Ascending aorta (tissue), 2 donors: ENCODE measurements at regions of chr11 and their contacts with region 1.

Region 1: DNA sequence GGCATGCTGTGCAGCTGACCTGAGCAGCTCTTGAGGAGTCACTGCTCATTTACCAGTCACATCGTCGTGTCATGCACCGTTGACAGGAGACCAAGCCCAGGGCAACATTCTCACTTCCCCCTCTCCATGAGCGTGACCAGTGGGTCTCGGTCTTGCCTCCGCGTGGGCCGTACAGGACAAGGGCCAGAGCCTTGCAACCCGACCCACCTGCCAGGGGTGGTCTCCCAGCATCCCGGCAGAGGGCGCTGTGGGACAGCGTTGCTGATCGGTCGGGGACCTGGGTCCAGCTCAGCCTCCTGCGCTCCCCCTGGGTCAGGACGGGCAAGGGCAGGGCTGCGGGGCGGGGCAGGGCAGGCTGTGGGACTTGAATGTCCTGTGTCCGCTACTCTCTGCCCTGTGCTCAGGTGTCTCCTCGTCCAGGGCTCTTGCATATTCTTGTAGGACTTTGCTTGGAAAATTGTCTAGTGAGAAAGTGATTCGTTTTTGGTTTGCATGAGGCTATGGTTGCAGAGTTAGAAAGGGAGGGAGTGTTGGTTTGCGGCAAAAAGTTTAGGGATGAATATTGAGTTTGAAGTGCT is 16.2 kb downstream of the EIF4G2 start:
- DNase-seq: peak; percentile 36 to 92
- H3K4me3 ChIP-seq: peak overlapping the region in 1 of 2 donors; percentile 10
- H3K27ac ChIP-seq: no peak overlapping the region
- H3K4me1 ChIP-seq: peaks cover 0 to 7% of the 10 kb centered on the region in 2 donors
- H3K27me3 ChIP-seq: no peaks in the 10 kb centered on the region
- CTCF ChIP-seq: peak; percentile 93 to 96 (median 96)

Region 2: GRCh38 chr11:11022125-11022730 is 229.7 kb after region 1 on chr11:
- intact Hi-C with region 1: loop called (anchors 1 kb)
- DNase-seq: no peak
- H3K4me3 ChIP-seq: no peak overlapping the region
- H3K27ac ChIP-seq: no peak overlapping the region
- H3K4me1 ChIP-seq: no peaks in the 10 kb centered on the region
- H3K27me3 ChIP-seq: no peaks in the 10 kb centered on the region
- CTCF ChIP-seq: peak; percentile 30 to 58 (median 44)